Sigmoid colon (tissue), 7 donors: ENCODE measurements at regions of chr5 and their contacts with region 1.

Region 1: GRCh38 chr5:78648359-78649210 is at the start of gene LHFPL2:
- DNase-seq: peak; percentile 88
- H3K4me3 ChIP-seq: peak within 1 kb of the TSS; percentile 67 to 94 (median 90)
- H3K27ac ChIP-seq: peak within 1 kb of the TSS; percentile 92 to 97 (median 96)
- H3K4me1 ChIP-seq: peaks cover 0 to 45% (median 40%) of the 10 kb centered on the region in 4 donors
- H3K27me3 ChIP-seq: no peaks in the 10 kb centered on the region
- CTCF ChIP-seq: no peak
- EP300 ChIP-seq: no peak
- POLR2A ChIP-seq: peak in 1 of 2 donors; percentile 27
- total RNA-seq, gene LHFPL2: 21.4 to 34.9 (median 26.6) TPM

Region 2: GRCh38 chr5:78294248-78295034 is 354.1 kb before region 1 on chr5 and contains the start of gene AP3B1:
- intact Hi-C with region 1: loop called (anchors 10 kb)
- DNase-seq: peak; percentile 100
- H3K4me3 ChIP-seq: peak within 1 kb of the TSS; percentile 73 to 97 (median 88)
- H3K27ac ChIP-seq: peak within 1 kb of the TSS; percentile 86 to 93 (median 88)
- H3K4me1 ChIP-seq: peaks cover 5 to 27% (median 21%) of the 10 kb centered on the region in 4 donors
- H3K27me3 ChIP-seq: no peaks in the 10 kb centered on the region
- CTCF ChIP-seq: no peak
- EP300 ChIP-seq: peak in 1 of 4 donors; percentile 68
- POLR2A ChIP-seq: peak; percentile 92 to 93
- total RNA-seq, gene AP3B1: 34.6 to 48.2 (median 39.5) TPM

Region 3: GRCh38 chr5:78467752-78468357 is 180.7 kb before region 1 on chr5:
- intact Hi-C with region 1: loop called (anchors 5 kb)
- DNase-seq: no peak
- H3K4me3 ChIP-seq: no peak overlapping the region
- H3K27ac ChIP-seq: no peak overlapping the region
- H3K4me1 ChIP-seq: peaks cover 0 to 4% (median 0%) of the 10 kb centered on the region in 4 donors
- H3K27me3 ChIP-seq: no peaks in the 10 kb centered on the region
- CTCF ChIP-seq: peak; percentile 53 to 80 (median 76)
- EP300 ChIP-seq: no peak
- POLR2A ChIP-seq: no peak

Region 4: GRCh38 chr5:78594610-78595457 is 53.8 kb before region 1 on chr5:
- intact Hi-C with region 1: loop called (anchors 5 kb)
- DNase-seq: peak; percentile 72
- H3K4me3 ChIP-seq: no peak overlapping the region
- H3K27ac ChIP-seq: peak overlapping the region; percentile 73 to 85 (median 75)
- H3K4me1 ChIP-seq: peaks cover 0 to 85% (median 73%) of the 10 kb centered on the region in 4 donors
- H3K27me3 ChIP-seq: no peaks in the 10 kb centered on the region
- CTCF ChIP-seq: no peak
- EP300 ChIP-seq: no peak
- POLR2A ChIP-seq: no peak

Region 5: DNA sequence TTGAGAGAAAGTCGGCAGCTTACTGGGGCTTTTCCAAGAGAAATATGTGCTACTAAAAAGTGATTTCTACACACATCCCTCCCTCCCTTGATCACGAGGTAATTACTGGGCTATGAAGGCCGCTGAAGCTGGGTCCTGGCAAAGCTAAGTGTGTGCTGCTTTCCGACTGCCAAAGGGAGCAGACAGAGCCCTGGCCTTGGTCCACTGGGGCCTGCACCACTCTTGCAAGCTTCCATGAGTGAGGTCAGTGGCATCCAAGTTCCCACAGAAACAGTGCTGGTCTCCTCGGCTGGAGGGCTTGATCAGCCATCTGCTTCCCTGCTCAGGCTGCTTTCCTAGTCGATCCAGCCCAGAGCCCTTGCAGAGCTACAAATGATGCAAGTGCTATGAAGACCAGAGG is 154.8 kb after region 1 on chr5:
- intact Hi-C with region 1: loop called (anchors 5 kb)
- DNase-seq: peak; percentile 95
- H3K4me3 ChIP-seq: peak overlapping the region in 1 of 4 donors; percentile 4
- H3K27ac ChIP-seq: peak overlapping the region; percentile 6 to 79 (median 76)
- H3K4me1 ChIP-seq: peaks cover 0 to 22% (median 15%) of the 10 kb centered on the region in 4 donors
- H3K27me3 ChIP-seq: no peaks in the 10 kb centered on the region
- CTCF ChIP-seq: no peak
- EP300 ChIP-seq: no peak
- POLR2A ChIP-seq: no peak

Region 6: GRCh38 chr5:78972654-78973428 is 324.3 kb after region 1 on chr5:
- intact Hi-C with region 1: loop called (anchors 5 kb)
- DNase-seq: no peak
- H3K4me3 ChIP-seq: no peak overlapping the region
- H3K27ac ChIP-seq: peak overlapping the region; percentile 21 to 61 (median 43)
- H3K4me1 ChIP-seq: peaks cover 0 to 34% (median 31%) of the 10 kb centered on the region in 4 donors
- H3K27me3 ChIP-seq: no peaks in the 10 kb centered on the region
- CTCF ChIP-seq: no peak
- EP300 ChIP-seq: no peak
- POLR2A ChIP-seq: no peak